PC-3 (cell line): ENCODE measurements at regions of chr1 and their contacts with region 1.

Region 1: DNA sequence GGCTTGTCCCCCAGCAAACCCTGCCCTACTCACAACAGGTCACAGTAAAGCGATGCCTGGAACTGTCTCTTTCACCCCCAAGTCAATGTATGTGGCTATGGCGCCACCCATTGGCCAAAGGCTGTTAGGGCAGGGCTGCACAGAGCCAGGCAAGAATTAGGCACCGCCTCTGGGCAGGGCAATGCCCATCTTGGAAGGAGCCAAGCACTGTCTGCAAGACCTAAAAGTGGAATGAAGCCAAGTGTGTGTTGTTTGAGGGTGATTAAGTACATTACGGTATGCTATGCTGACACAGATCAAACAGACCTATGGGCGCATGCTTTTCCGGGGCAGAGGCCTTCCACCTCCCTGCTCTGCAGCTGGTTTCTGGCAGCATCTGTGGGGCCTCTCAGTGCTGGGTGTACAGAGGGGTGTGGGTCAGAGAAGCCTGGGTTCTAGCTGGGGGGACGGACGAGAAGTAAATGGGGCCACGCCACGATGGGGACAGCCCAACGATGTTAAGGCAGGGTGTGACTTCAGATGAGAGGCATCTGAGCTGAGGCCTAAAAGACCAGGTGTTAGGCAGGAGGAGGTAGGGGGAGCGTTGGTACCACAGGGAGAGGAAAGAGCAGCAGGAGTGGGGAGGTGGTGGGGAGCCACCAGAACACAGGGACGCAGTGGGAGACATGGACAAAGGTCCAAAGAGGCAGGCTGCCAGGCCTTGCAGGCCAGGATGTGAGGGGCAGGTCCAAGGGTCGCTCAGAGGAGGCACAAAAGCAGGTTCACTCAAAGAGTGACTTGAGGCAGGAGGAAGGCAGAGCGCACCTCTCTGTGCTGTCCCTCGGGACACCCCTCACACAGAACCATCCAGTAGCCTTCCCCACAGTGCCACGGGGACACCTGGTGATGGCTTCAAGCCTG is 49.8 kb downstream of the ACOT7 start:
- DNase-seq: peak; percentile 100
- ATAC-seq: peak; percentile 92
- H3K4me3 ChIP-seq: no peak overlapping the region
- H3K27ac ChIP-seq: peak overlapping the region; percentile 86
- H3K4me1 ChIP-seq: peaks cover 26% of the 10 kb centered on the region
- H3K27me3 ChIP-seq: no peaks in the 10 kb centered on the region
- CTCF ChIP-seq: peak; percentile 100

Region 2: DNA sequence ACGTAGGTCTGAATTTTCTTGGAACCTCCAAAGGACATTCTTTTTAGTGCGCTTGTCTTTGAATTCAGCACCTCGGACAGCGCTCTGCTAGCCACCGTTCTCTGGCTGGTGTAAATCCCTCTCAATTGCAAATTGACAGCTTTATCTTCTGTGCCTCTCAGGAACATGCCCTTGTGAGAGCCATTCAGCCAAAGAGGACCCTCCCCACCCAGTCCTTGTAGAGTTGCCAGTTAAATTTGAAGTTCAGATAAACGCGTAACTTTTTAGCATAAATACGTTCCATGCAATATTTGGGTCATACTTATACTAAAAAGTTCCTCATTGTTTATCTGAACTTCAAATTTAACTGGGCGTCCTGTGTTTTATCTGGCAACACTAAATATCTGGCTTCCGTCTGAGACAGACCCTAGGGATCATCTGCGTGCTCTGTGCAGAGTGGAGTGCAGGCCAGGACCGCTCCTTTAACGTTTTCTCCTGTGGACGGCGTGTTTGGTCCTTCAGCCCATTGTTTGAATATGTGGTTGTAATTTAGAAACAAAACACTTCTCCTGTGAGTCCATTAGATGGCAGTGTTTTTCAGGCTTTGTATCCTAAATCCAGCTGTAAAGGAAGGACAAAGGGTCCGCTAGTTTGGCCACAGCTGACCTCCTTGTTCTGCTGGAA is 291.1 kb before region 1 on chr1:
- CTCF ChIA-PET with region 1: no interaction called
- POLR2A ChIA-PET with region 1: no interaction called
- intact Hi-C with region 1: loop called (anchors 5 kb)
- DNase-seq: peak; percentile 86
- ATAC-seq: peak; percentile 80
- H3K4me3 ChIP-seq: no peak overlapping the region
- H3K27ac ChIP-seq: no peak overlapping the region
- H3K4me1 ChIP-seq: no peaks in the 10 kb centered on the region
- H3K27me3 ChIP-seq: no peaks in the 10 kb centered on the region
- CTCF ChIP-seq: peak; percentile 94

Region 3: GRCh38 chr1:6245086-6245868 is 98.5 kb before region 1 on chr1:
- CTCF ChIA-PET with region 1: interaction called, 17 read pairs
- POLR2A ChIA-PET with region 1: no interaction called
- intact Hi-C with region 1: loop called (anchors 1 kb)
- DNase-seq: peak; percentile 96
- ATAC-seq: peak; percentile 48
- H3K4me3 ChIP-seq: peak overlapping the region; percentile 68
- H3K27ac ChIP-seq: no peak overlapping the region
- H3K4me1 ChIP-seq: peaks cover 21% of the 10 kb centered on the region
- H3K27me3 ChIP-seq: peaks cover 23% of the 10 kb centered on the region
- CTCF ChIP-seq: peak; percentile 94

Region 4: GRCh38 chr1:6294615-6295556 is 48.9 kb before region 1 on chr1:
- CTCF ChIA-PET with region 1: no interaction called
- POLR2A ChIA-PET with region 1: interaction called, 3 read pairs
- intact Hi-C with region 1: loop called (anchors 1 kb)
- DNase-seq: peak; percentile 85
- ATAC-seq: peak; percentile 1
- H3K4me3 ChIP-seq: no peak overlapping the region
- H3K27ac ChIP-seq: peak overlapping the region; percentile 96
- H3K4me1 ChIP-seq: peaks cover 39% of the 10 kb centered on the region
- H3K27me3 ChIP-seq: no peaks in the 10 kb centered on the region
- CTCF ChIP-seq: no peak; the same call in 1 of the 2 replicates

Region 5: GRCh38 chr1:6359216-6360116 is 15.7 kb after region 1 on chr1:
- CTCF ChIA-PET with region 1: interaction called, 3 read pairs
- POLR2A ChIA-PET with region 1: no interaction called
- intact Hi-C with region 1: loop called (anchors 2 kb)
- DNase-seq: no peak
- ATAC-seq: no peak
- H3K4me3 ChIP-seq: no peak overlapping the region
- H3K27ac ChIP-seq: no peak overlapping the region
- H3K4me1 ChIP-seq: peaks cover under 1% of the 10 kb centered on the region; the same call in 1 of the 2 replicates
- H3K27me3 ChIP-seq: no peaks in the 10 kb centered on the region
- CTCF ChIP-seq: no peak

Region 6: DNA sequence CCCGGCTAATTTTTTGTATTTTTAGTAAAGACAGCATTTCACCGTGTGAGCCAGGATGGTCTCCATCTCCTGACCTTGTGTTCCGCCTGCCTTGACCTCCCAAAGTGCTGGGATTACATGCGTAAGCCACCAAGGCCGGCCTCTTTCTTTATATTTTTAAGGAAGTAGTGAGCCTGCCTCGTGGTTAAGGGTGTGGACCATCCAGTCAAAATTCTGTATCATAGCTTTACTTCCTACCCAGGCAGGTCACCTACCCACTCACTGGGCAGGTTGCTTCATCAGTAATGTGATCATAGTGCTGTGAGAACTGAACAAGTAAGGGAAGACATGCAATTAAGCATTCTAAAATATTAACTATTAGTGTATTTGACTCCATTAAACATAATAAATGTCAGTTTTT is 57.9 kb after region 1 on chr1:
- CTCF ChIA-PET with region 1: no interaction called
- POLR2A ChIA-PET with region 1: no interaction called
- intact Hi-C with region 1: loop called (anchors 1 kb)
- DNase-seq: peak; percentile 45
- ATAC-seq: peak; percentile 25; the same call in 1 of the 2 replicates
- H3K4me3 ChIP-seq: no peak overlapping the region
- H3K27ac ChIP-seq: no peak overlapping the region
- H3K4me1 ChIP-seq: peaks cover 7% of the 10 kb centered on the region; the same call in 1 of the 2 replicates
- H3K27me3 ChIP-seq: no peaks in the 10 kb centered on the region
- CTCF ChIP-seq: no peak